H1 (cell line): ENCODE measurements at regions of chr11 and their contacts with region 1.

Region 1: GRCh38 chr11:8192016-8192895 is 23.4 kb upstream of the RIC3 start:
- DNase-seq: peak in 1 of 2 experiments; percentile 88
- H3K4me3 ChIP-seq: no peak overlapping the region
- H3K27ac ChIP-seq: no peak overlapping the region
- H3K4me1 ChIP-seq: peaks cover 0 to 3% (median 0%) of the 10 kb centered on the region in 4 experiments; a peak in 2 of 7 replicates
- H3K27me3 ChIP-seq: peaks cover 0 to 10% (median under 1%) of the 10 kb centered on the region in 4 experiments; a peak in 1 of 7 replicates
- CTCF ChIP-seq: peak; percentile 83 to 98 (median 89)
- EP300 ChIP-seq: no peak
- POLR2A ChIP-seq: no peak
- RAD21 ChIP-seq: peak; percentile 89

Region 2: DNA sequence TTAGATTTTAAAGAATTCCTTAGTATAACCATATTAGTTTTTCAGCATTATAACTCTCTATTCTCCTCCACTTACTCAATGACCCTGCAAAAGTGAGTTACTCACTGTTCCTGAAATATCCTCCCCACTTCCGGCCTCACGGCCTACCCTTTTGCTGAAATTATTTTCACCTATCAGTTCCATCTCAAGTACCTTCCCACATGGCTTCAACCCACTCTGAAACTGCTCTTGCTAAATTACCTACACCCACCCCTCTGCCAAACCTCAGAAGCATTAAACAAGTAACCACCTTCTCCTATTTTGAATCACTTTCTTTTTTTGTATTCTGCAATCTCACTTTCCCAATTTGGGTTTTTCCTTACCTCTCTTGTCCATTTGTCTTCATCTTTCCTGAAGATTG is 433.2 kb before region 1 on chr11:
- CTCF ChIA-PET with region 1: no interaction called
- POLR2A ChIA-PET with region 1: no interaction called
- DNase-seq: no peak
- H3K4me3 ChIP-seq: no peak overlapping the region
- H3K27ac ChIP-seq: no peak overlapping the region
- H3K4me1 ChIP-seq: no peaks in the 10 kb centered on the region
- H3K27me3 ChIP-seq: no peaks in the 10 kb centered on the region
- CTCF ChIP-seq: no peak
- EP300 ChIP-seq: no peak
- POLR2A ChIP-seq: no peak
- RAD21 ChIP-seq: no peak

Region 3: GRCh38 chr11:8180469-8180868 is 11.8 kb before region 1 on chr11:
- CTCF ChIA-PET with region 1: interaction called, 39 read pairs
- POLR2A ChIA-PET with region 1: no interaction called
- DNase-seq: peak in 1 of 2 experiments; percentile 71
- H3K4me3 ChIP-seq: no peak overlapping the region
- H3K27ac ChIP-seq: no peak overlapping the region
- H3K4me1 ChIP-seq: no peaks in the 10 kb centered on the region
- H3K27me3 ChIP-seq: no peaks in the 10 kb centered on the region; a peak in 1 of 7 replicates
- CTCF ChIP-seq: peak; percentile 35 to 60 (median 54)
- EP300 ChIP-seq: no peak
- POLR2A ChIP-seq: no peak
- RAD21 ChIP-seq: peak in 1 of 2 experiments; percentile 36; a peak in 3 of 4 replicates

Region 4: GRCh38 chr11:8225589-8226036 is 33.4 kb after region 1 on chr11:
- CTCF ChIA-PET with region 1: interaction called, 342 read pairs
- POLR2A ChIA-PET with region 1: no interaction called
- DNase-seq: peak; percentile 86 to 98
- H3K4me3 ChIP-seq: no peak overlapping the region
- H3K27ac ChIP-seq: no peak overlapping the region
- H3K4me1 ChIP-seq: peaks cover 0 to 14% (median 3%) of the 10 kb centered on the region in 4 experiments; a peak in 4 of 7 replicates
- H3K27me3 ChIP-seq: no peaks in the 10 kb centered on the region; a peak in 1 of 7 replicates
- CTCF ChIP-seq: peak; percentile 90 to 98 (median 97)
- EP300 ChIP-seq: no peak
- POLR2A ChIP-seq: no peak
- RAD21 ChIP-seq: peak; percentile 98 to 99

Region 5: DNA sequence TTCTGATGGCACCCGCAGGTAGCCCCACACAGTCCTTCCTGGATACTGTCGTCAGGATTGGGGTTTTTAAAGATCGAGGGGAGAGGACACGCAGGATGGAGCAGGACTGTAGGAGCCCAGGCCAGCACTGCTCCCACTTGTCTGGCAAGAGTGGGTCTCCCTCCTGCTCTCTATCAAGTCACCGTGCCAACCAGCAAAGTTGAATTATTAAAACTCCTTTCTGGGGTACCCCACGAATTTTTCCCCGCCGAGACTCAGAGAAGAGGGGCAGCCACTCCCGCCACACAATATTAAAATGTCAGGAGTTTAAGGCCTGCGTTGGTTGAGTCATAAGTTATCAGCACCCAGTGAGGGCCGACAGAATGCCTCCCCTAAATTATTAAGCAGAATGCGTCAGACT is 61.3 kb after region 1 on chr11:
- CTCF ChIA-PET with region 1: interaction called, 13 read pairs
- POLR2A ChIA-PET with region 1: no interaction called
- DNase-seq: peak in 1 of 2 experiments; percentile 14
- H3K4me3 ChIP-seq: no peak overlapping the region
- H3K27ac ChIP-seq: no peak overlapping the region
- H3K4me1 ChIP-seq: peaks cover 0 to 2% (median 0%) of the 10 kb centered on the region in 4 experiments; a peak in 1 of 7 replicates
- H3K27me3 ChIP-seq: no peaks in the 10 kb centered on the region
- CTCF ChIP-seq: no peak
- EP300 ChIP-seq: no peak
- POLR2A ChIP-seq: no peak
- RAD21 ChIP-seq: no peak

Region 6: DNA sequence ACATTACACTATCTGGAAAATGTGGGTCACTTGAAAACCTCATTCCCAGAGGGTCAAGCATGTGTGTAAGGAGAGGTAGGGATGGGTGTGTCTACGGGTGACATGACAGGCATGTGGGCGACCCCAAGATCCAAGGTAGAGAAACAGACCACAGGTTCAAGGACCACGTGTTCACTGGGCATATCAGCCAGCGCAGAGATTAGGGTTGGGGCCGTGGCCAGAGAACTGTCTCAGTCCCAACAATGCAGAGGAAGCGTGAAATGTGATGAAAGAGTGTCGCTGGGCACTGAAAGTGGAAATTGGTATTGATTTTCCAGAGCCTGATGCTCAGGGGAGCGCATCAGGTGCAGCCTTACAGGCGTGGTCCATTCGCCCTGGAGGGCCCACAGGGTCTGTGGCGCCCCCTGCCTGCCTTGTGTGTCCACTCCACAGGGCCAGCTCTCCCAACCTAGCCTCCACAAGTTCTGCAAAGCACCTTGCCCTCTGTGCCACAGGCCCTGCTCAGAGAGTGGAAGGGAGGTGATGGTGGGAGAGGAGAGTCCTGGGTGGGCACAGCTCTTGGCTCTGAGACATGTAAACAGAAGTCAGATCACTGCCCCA is 126.2 kb after region 1 on chr11:
- CTCF ChIA-PET with region 1: interaction called, 26 read pairs
- POLR2A ChIA-PET with region 1: no interaction called
- DNase-seq: peak in 1 of 2 experiments; percentile 81
- H3K4me3 ChIP-seq: no peak overlapping the region
- H3K27ac ChIP-seq: no peak overlapping the region
- H3K4me1 ChIP-seq: no peaks in the 10 kb centered on the region
- H3K27me3 ChIP-seq: peaks cover 0 to 3% (median 0%) of the 10 kb centered on the region in 4 experiments; a peak in 2 of 7 replicates
- CTCF ChIP-seq: peak; percentile 90 to 92 (median 92)
- EP300 ChIP-seq: no peak
- POLR2A ChIP-seq: no peak
- RAD21 ChIP-seq: peak; percentile 90